ENCODE measurements at regions of chrX and their contacts with region 1.

Region 1: GRCh38 chrX:7542587-7543380 is 300.2 kb upstream of the VCX start:
- DNase-seq: no peak
- H3K4me3 ChIP-seq: no peak overlapping the region
- H3K27ac ChIP-seq: no peak overlapping the region
- H3K4me1 ChIP-seq: no peaks in the 10 kb centered on the region
- H3K27me3 ChIP-seq: no peaks in the 10 kb centered on the region
- CTCF ChIP-seq: no peak
- EP300 ChIP-seq: no peak
- POLR2A ChIP-seq: no peak

Region 2: DNA sequence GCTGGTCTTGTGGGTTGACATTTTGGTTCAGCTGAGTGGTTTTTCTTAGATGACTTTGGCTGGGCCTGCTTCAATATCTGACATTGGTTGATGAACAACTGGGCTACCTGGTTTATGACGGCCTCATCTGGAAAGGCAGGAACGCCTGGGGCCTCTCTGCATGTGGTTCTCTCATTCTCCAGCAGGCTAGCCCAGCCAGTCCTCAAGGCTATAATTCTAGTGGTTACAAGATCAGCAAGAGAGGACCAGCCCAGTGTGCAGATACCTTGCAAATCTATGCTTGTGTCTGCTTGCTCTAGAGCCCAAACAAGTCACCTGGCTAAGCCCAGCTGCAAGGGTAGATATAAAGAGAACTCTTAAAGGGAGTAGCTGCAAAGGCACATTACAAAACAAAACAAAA is 180.7 kb before region 1 on chrX:
- in situ Hi-C with region 1: no loop called
- intact Hi-C with region 1: no loop called
- DNase-seq: no peak
- H3K4me3 ChIP-seq: no peak overlapping the region
- H3K27ac ChIP-seq: no peak overlapping the region
- H3K4me1 ChIP-seq: no peaks in the 10 kb centered on the region
- H3K27me3 ChIP-seq: no peaks in the 10 kb centered on the region
- CTCF ChIP-seq: no peak
- EP300 ChIP-seq: no peak
- POLR2A ChIP-seq: no peak

Region 3: DNA sequence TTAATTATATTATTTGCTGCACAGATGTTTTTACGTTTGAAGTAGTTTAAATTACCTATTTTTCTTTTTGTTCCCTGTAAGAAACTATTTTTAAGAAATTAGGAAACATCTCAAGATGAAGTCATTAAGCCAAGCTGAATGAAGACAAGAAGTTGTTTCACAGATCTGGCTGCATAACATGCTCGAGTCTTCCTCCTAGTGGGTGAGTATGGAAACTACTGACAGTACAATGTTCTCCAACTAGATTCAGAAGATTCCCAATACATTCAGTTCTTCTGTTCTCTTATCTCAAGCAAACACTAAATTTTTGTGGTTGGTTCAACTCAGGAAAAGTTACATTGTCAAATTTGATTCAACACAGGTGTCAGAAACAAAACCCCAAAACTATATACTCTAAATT is 43.3 kb after region 1 on chrX:
- in situ Hi-C with region 1: no loop called
- intact Hi-C with region 1: loop called (anchors 1 kb)
- DNase-seq: no peak
- H3K4me3 ChIP-seq: no peak overlapping the region
- H3K27ac ChIP-seq: no peak overlapping the region
- H3K4me1 ChIP-seq: no peaks in the 10 kb centered on the region
- H3K27me3 ChIP-seq: no peaks in the 10 kb centered on the region
- CTCF ChIP-seq: peak; percentile 8 to 28 (median 22)
- EP300 ChIP-seq: no peak
- POLR2A ChIP-seq: no peak

Region 4: DNA sequence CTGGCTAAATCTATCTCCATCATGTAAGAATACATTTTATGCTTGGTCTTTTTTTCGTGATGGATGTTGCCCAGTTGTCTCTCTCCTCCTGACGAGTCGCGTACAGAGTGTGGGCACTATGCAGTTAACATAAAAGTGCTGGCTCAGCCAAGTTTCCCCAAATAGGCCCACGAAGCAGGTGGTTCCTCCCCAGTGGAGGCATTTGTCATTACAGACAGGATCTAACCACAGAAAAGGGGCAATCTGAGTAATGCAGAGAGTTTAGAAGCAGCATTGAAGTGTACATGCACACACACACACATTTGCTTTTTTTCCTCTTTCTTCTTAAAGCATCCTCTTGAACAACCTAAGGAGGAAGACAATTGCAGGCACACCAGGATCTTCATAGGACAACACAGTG is 111.5 kb after region 1 on chrX:
- in situ Hi-C with region 1: no loop called
- intact Hi-C with region 1: no loop called
- DNase-seq: no peak
- H3K4me3 ChIP-seq: no peak overlapping the region
- H3K27ac ChIP-seq: no peak overlapping the region
- H3K4me1 ChIP-seq: no peaks in the 10 kb centered on the region
- H3K27me3 ChIP-seq: no peaks in the 10 kb centered on the region
- CTCF ChIP-seq: no peak
- EP300 ChIP-seq: no peak
- POLR2A ChIP-seq: no peak